Tibial artery (tissue), 4 donors: ENCODE measurements at regions of chr15 and their contacts with region 1.

Region 1: DNA sequence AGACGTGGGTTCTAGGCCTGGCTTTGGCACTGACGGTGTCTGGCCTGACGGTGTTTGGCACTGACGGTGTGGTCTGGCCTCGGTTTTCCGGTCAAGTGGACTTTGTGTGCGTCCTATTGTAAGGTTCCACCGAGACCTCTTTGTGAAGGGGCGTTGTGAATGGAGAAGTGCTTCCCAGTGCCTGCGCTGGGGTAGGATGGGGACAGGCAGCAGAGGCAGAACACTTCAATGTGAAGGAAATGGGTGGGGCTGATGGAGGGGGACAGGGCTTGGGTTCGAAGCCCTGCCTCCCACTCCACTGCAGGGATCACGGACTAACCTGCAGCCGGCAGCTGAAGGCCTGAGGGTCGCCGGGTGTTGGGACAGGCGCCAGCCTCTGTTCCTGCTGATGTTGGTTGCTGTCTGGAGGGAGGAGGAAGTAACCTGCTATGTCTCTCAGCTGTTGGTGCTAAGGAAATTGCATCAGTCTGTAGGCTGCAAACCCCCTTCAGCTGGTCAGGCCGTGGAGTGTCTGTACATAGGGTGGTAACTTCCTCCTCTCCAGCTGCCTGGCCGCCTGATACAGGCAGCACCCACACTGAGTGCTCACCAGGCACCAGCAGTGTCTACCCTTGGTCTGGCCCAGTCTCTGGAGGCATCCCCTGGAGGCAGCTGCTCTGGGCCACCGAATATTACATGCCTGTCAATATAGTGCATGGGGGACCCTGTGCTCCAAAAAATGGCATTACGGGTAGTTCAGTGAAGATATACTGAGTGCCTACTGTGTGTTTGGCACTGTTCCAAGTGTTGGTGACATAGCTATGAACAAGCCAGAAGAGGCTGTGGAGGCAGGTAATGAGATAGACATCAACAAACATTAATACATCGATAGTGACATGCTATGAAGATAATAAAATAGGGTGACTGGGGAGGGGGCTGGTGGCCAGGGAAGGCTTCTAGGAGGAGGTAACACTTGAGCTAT is 1.1 kb downstream of the TM6SF1 start:
- DNase-seq: peak; percentile 67 to 76
- H3K4me3 ChIP-seq: peak overlapping the region; percentile 47 to 62
- H3K27ac ChIP-seq: no peak overlapping the region
- H3K4me1 ChIP-seq: peaks cover 0 to 22% (median 15%) of the 10 kb centered on the region in 4 donors
- H3K27me3 ChIP-seq: peaks cover 0 to 20% of the 10 kb centered on the region in 2 donors
- CTCF ChIP-seq: no peak

Region 2: GRCh38 chr15:83011271-83012075 is 97.1 kb before region 1 on chr15 and contains the start of gene C15orf40:
- intact Hi-C with region 1: loop called (anchors 10 kb)
- DNase-seq: peak; percentile 83 to 93
- H3K4me3 ChIP-seq: peak within 1 kb of the TSS; percentile 93 to 95
- H3K27ac ChIP-seq: peak within 1 kb of the TSS; percentile 71 to 87
- H3K4me1 ChIP-seq: peaks cover 4 to 21% (median 18%) of the 10 kb centered on the region in 4 donors
- H3K27me3 ChIP-seq: no peaks in the 10 kb centered on the region
- CTCF ChIP-seq: peak; percentile 65 to 69